HepG2 (cell line): ENCODE measurements at regions of chr10 and their contacts with region 1.

Region 1: DNA sequence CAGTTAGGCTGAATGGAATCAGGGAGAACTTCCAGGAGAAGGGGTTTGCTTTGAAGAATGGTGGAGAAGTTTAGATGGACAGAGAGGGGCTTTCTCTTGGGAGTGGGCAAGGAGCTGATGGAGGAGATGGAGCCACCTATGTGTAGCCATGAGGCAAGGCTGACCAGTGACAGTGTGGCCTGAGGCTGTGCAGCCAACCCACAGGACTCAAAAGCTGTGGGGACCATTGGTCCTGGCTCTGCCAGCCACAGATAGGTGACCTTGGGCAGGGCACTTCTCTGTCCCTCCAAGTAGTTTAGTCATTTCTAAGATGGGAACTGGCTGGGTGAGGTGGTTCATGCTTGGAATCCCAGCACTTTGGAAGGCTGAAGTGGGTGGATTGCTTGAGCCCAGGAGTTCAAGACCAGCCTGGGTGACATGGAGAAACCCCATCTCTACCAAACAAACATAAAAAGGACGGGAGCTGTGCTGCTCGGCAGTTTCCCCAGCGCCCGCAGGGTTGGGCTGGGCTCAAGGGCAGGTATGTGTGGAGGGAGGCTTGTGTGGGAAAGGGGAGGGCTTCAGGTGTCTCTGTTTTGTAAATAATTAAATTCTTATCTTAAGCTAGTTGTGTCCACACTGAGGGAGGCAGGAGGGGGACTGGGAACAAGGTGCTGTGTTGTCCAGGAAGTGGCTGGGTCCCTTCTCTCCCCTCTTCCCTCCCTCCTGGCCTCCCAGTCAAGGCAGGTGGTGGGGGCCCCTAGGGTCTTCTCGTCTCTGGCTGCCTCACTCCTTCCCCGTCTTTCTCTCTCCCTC is 18.9 kb downstream of the NEURL1 start:
- DNase-seq: peak; percentile 56
- ATAC-seq: peak; percentile 80
- H3K4me3 ChIP-seq: peak overlapping the region; percentile 13 to 51 (median 24); a peak in 4 of 6 replicates
- H3K27ac ChIP-seq: no peak overlapping the region
- H3K4me1 ChIP-seq: peaks cover 47% of the 10 kb centered on the region
- H3K27me3 ChIP-seq: peaks cover 0 to 36% of the 10 kb centered on the region in 2 experiments; a peak in 3 of 5 replicates
- CTCF ChIP-seq: no peak
- EP300 ChIP-seq: 0 out of 4 replicates have a peak, but pooled peaks of 1 of the 2 experiments have one; percentile 15
- POLR2A ChIP-seq: no peak
- RAD21 ChIP-seq: no peak

Region 2: DNA sequence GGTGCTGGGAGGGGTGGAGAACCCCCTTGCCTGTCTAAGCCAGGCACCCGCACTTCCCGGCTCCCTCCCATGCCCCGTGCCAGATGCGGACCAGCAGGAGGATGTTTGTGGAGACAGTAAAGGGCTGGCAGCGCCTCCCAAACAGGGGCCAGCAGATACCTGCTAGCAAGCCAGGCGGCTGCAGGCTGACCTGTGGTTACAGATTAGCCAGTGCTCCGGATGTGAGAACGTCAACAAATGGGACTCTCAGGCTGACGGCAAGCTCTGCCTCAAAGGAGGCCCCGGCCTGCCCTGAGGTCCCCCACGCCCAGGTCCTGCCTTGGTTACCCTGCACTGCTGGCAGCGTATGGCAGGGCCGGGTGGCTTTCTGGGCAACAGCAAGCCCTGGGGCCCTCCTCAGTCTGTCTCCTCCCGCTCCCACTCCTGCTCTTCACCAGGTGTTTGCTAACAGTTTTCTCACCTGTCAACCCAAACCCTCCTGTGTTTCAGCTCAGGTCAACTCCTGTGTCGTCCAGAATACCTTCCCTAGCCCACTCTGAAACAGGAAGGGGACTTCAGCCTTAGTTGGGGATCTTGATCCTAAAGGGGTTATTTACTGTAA is 66.5 kb after region 1 on chr10:
- CTCF ChIA-PET with region 1: no interaction called
- POLR2A ChIA-PET with region 1: no interaction called
- in situ Hi-C with region 1: loop called (anchors 5 kb)
- intact Hi-C with region 1: loop called (anchors 5 kb)
- DNase-seq: peak; percentile 82
- ATAC-seq: peak; percentile 94
- H3K4me3 ChIP-seq: peak overlapping the region; percentile 16 to 61 (median 18); a peak in 2 of 6 replicates
- H3K27ac ChIP-seq: no peak overlapping the region
- H3K4me1 ChIP-seq: peaks cover 67% of the 10 kb centered on the region
- H3K27me3 ChIP-seq: peaks cover 4 to 53% of the 10 kb centered on the region in 2 experiments
- CTCF ChIP-seq: peak; percentile 45
- EP300 ChIP-seq: peak in 1 of 2 experiments; percentile 48; a peak in 1 of 4 replicates
- POLR2A ChIP-seq: no peak
- RAD21 ChIP-seq: no peak